CD4-positive, alpha-beta memory T cell (primary cell): ENCODE measurements at regions of chr6 and their contacts with region 1.

Region 1: DNA sequence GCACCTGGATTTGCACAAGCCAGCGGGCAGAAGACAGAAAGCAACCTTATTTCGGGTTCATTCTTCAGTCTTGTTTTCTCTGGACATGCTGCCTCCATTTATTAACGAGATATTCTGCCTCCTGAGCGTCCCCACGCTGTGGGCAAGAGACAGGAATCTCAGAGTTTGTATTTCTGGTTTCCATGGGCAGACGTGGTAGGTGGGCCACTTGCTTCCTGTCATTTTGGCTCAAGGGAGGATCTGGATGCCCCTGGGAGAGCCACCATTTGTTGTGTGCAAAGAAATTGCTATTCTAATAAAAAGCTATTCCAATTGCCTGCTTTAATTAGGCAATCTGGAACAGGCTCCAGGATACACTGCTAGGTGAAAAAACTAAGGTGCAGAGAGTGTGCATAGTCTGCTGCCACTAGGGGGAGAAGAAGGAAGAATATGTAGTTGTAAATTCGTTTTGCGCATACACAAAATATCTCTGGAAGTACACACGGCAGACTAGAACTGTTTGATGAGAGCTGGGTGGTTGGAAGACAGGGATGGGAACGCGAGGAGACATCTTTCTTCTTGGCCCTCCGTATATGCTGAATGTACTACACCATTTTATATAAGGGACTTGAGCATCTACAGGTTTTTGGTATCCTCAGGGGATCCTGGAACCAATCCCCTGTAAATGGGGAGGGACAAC is 30.1 kb upstream of the SLC16A10 start:
- DNase-seq: peak in 4 of 5 donors; percentile 23 to 30 (median 27)
- H3K4me3 ChIP-seq: no peak overlapping the region
- H3K4me3 Mint-ChIP-seq: no peak overlapping the region
- H3K27ac ChIP-seq: no peak overlapping the region
- H3K27ac Mint-ChIP-seq: no peak overlapping the region
- H3K4me1 ChIP-seq: no peaks in the 10 kb centered on the region
- H3K4me1 Mint-ChIP-seq: peaks cover 0 to 5% (median 2%) of the 10 kb centered on the region in 4 donors
- H3K27me3 ChIP-seq: no peaks in the 10 kb centered on the region
- H3K27me3 Mint-ChIP-seq: no peaks in the 10 kb centered on the region

Region 2: DNA sequence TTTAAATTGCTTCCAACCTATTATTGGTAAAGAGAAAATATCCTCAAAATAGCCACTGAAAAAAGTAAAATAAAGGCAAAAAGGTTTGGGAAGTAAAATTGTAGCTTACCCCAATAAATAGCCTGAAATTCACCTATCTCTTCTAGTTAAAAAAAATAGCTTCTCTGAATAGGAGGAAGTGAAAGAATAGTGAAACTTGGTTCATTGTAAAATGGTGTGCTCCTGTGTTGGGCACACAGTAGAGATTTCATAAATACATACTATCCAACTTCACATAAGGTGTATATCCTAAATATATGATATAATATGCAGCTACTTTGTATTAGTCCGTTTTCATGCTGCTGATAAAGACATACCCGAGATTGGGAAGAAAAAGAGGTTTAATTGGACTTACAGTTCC is 287.3 kb before region 1 on chr6:
- CTCF ChIA-PET with region 1: no interaction called
- POLR2A ChIA-PET with region 1: no interaction called
- intact Hi-C with region 1: no loop called
- DNase-seq: no peak
- H3K4me3 ChIP-seq: no peak overlapping the region
- H3K4me3 Mint-ChIP-seq: no peak overlapping the region
- H3K27ac ChIP-seq: no peak overlapping the region
- H3K27ac Mint-ChIP-seq: no peak overlapping the region
- H3K4me1 ChIP-seq: no peaks in the 10 kb centered on the region
- H3K4me1 Mint-ChIP-seq: peaks cover 0 to 8% (median 0%) of the 10 kb centered on the region in 4 donors
- H3K27me3 ChIP-seq: no peaks in the 10 kb centered on the region
- H3K27me3 Mint-ChIP-seq: no peaks in the 10 kb centered on the region

Region 3: DNA sequence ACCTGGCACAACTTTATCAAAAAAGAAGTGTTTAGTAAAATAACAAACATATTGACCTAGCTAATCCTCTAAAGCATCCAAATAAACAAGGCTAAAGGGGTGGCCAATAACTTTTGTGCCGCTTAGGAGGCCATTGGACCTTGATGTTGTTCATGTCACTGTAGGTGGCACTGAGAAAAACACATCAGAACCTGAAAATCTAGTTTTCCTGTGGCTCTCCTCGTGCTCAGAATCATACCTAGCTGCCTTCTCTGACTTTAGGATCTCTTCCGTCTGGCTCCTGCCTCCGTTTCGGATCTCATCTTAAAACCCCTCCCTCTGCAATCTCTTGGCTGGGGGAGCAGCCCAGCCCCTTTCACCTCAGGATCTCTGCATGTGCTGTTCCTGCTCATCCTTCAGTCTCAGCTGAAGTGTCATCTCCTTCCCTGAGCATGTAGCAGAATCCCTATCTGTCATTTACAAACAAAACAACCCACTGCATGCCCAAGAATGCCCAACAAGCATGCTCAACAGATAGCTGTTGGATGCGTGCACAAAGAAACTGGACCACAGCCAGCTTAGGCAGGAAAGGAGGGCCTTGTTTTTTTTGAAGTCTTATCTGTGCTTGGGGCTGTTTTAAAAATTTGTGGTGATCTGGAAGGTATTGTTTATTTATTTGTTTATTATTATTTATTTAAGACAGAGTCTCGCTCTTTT is 11.4 kb after region 1 on chr6:
- CTCF ChIA-PET with region 1: interaction called, 23 read pairs
- POLR2A ChIA-PET with region 1: no interaction called
- intact Hi-C with region 1: no loop called
- DNase-seq: no peak
- H3K4me3 ChIP-seq: no peak overlapping the region
- H3K4me3 Mint-ChIP-seq: no peak overlapping the region
- H3K27ac ChIP-seq: no peak overlapping the region
- H3K27ac Mint-ChIP-seq: no peak overlapping the region
- H3K4me1 ChIP-seq: no peaks in the 10 kb centered on the region
- H3K4me1 Mint-ChIP-seq: peaks cover 0 to 3% (median 0%) of the 10 kb centered on the region in 4 donors
- H3K27me3 ChIP-seq: no peaks in the 10 kb centered on the region
- H3K27me3 Mint-ChIP-seq: peaks cover 6 to 10% of the 10 kb centered on the region in 2 donors